ENCODE measurements at regions of chr1 and their contacts with region 1.

Region 1: GRCh38 chr1:29062157-29062942 is 61.4 kb downstream of the TMEM200B start:
- DNase-seq: no peak
- H3K4me3 Mint-ChIP-seq: peak overlapping the region; percentile 74
- H3K27ac Mint-ChIP-seq: peak overlapping the region; percentile 91
- H3K4me1 Mint-ChIP-seq: peaks cover 25% of the 10 kb centered on the region
- H3K27me3 Mint-ChIP-seq: no peaks in the 10 kb centered on the region

Region 2: GRCh38 chr1:28782011-28782410 is 280.3 kb before region 1 on chr1:
- intact Hi-C with region 1: no loop called
- DNase-seq: no peak
- H3K4me3 Mint-ChIP-seq: no peak overlapping the region
- H3K27ac Mint-ChIP-seq: no peak overlapping the region
- H3K4me1 Mint-ChIP-seq: peaks cover 7% of the 10 kb centered on the region
- H3K27me3 Mint-ChIP-seq: peaks cover 17% of the 10 kb centered on the region

Region 3: GRCh38 chr1:29043274-29043965 is 18.9 kb before region 1 on chr1:
- intact Hi-C with region 1: loop called (anchors 1 kb)
- DNase-seq: no peak
- H3K4me3 Mint-ChIP-seq: no peak overlapping the region
- H3K27ac Mint-ChIP-seq: no peak overlapping the region
- H3K4me1 Mint-ChIP-seq: peaks cover 2% of the 10 kb centered on the region
- H3K27me3 Mint-ChIP-seq: no peaks in the 10 kb centered on the region

Region 4: GRCh38 chr1:29124366-29125236 is 62.3 kb after region 1 on chr1:
- intact Hi-C with region 1: loop called (anchors 10 kb)
- DNase-seq: peak; percentile 88
- H3K4me3 Mint-ChIP-seq: peak overlapping the region; percentile 82
- H3K27ac Mint-ChIP-seq: peak overlapping the region; percentile 29
- H3K4me1 Mint-ChIP-seq: peaks cover 6% of the 10 kb centered on the region
- H3K27me3 Mint-ChIP-seq: peaks cover 17% of the 10 kb centered on the region

Region 5: GRCh38 chr1:29145739-29146437 is 83.5 kb after region 1 on chr1:
- intact Hi-C with region 1: no loop called
- DNase-seq: no peak
- H3K4me3 Mint-ChIP-seq: no peak overlapping the region
- H3K27ac Mint-ChIP-seq: peak overlapping the region; percentile 3
- H3K4me1 Mint-ChIP-seq: peaks cover 3% of the 10 kb centered on the region
- H3K27me3 Mint-ChIP-seq: no peaks in the 10 kb centered on the region

Measured in activated CD4-positive, alpha-beta T cell treated with anti-CD3 and anti-CD28 coated beads, Interleukin-2, amount 10 ng/mL, durations not matched to agents 24 days and 14 days (primary cell).